Activated T-helper 2 cell treated with anti-CD3 and anti-CD28 coated beads, Interferon-gamma antibody, Interleukin-2, Interleukin-4, amounts not matched to agents 10 μg/mL and 5 μg/mL and 100 μg/mL, durations not matched to agents 14 hours and 24 hours and 36 hours (primary cell): ENCODE measurements at regions of chr10 and their contacts with region 1.

Region 1: GRCh38 chr10:60646966-60647796 is 131.1 kb upstream of the CDK1 start:
- DNase-seq: no peak
- H3K4me3 Mint-ChIP-seq: no peak overlapping the region
- H3K27ac Mint-ChIP-seq: no peak overlapping the region
- H3K4me1 Mint-ChIP-seq: peaks cover 8% of the 10 kb centered on the region
- H3K27me3 Mint-ChIP-seq: no peaks in the 10 kb centered on the region

Region 2: DNA sequence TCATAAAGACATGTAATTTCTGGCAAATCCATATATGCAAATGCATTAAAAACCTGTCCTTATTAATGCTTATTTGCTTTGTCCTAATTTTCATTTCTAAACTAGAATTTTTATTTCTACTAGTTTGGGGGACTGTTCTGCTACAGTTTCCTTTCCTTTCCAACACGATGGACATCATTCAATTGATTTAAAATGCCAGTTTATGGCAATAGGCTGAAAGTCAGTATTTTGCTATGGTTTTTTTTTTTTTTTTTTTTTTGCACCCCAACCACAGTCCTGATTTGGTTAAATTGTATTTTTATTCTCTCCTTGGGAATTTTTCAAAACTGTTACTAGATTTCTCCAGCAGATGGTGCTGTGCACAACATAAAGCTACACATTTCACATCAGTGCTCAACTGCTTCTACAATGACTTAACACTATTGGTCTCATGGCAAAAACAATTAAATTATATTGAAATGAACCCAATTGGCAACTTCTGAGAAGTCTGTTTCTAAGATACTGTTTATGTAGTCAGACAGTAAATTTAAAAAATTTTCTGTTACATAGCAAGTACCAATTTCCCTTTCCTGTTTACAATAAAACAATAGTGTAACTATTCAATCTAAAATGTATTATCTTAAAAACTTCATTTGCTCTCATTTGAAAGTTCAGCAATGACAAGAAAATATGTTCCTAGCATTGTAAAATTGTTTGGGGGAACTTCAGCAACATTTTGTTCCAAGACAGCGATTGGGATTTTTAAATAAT is 547.0 kb before region 1 on chr10:
- intact Hi-C with region 1: loop called (anchors 2 kb)
- DNase-seq: no peak
- H3K4me3 Mint-ChIP-seq: no peak overlapping the region
- H3K27ac Mint-ChIP-seq: no peak overlapping the region
- H3K4me1 Mint-ChIP-seq: no peaks in the 10 kb centered on the region
- H3K27me3 Mint-ChIP-seq: no peaks in the 10 kb centered on the region

Region 3: DNA sequence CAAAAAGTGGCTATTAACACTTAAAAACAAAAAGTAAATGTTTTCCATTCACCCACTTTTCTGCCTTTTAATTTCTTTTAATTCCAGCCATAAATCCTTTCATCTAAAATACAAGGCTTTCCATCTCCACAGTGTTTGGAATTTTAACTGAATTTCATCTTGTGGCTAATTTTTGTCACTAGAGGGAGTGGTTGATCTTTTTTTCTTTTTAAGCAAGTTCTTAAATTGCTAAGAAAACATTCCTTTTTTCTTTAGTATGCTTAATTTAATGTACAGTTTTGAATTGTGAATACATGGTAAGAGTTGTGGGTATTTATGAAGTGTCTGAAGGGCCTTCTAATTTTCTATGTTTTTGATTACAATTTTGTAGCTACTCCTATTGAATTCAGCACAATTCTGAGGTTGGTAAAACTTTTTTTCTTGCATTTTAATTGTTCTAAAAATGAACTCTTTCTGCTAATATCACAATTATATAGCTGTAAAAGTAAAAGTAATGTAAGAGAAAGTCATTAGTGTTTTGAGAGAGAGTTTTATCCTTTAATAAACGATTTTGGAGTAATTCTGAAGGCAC is 202.6 kb before region 1 on chr10:
- intact Hi-C with region 1: loop called (anchors 1 kb)
- DNase-seq: no peak
- H3K4me3 Mint-ChIP-seq: no peak overlapping the region
- H3K27ac Mint-ChIP-seq: no peak overlapping the region
- H3K4me1 Mint-ChIP-seq: peaks cover 5% of the 10 kb centered on the region
- H3K27me3 Mint-ChIP-seq: no peaks in the 10 kb centered on the region

Region 4: DNA sequence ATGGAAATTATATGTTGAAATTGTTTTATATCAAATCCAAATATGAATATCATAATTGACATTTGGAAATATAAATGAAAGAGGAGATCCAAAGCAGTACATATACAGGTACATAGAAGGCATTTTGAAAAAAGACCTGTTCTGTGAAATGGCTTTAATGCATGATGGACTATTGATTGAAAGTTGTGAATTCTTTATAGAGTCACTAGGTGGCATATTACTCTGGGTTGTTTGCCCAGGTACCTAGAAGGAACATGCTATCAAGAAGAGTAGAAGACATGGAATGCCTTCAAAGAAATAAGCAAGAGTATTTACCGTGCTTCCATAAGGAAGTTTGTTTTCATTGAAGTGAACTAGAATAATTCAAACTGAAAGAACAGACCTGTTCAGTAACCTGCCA is 97.5 kb before region 1 on chr10:
- intact Hi-C with region 1: loop called (anchors 1 kb)
- DNase-seq: no peak
- H3K4me3 Mint-ChIP-seq: no peak overlapping the region
- H3K27ac Mint-ChIP-seq: no peak overlapping the region
- H3K4me1 Mint-ChIP-seq: no peaks in the 10 kb centered on the region
- H3K27me3 Mint-ChIP-seq: no peaks in the 10 kb centered on the region

Region 5: DNA sequence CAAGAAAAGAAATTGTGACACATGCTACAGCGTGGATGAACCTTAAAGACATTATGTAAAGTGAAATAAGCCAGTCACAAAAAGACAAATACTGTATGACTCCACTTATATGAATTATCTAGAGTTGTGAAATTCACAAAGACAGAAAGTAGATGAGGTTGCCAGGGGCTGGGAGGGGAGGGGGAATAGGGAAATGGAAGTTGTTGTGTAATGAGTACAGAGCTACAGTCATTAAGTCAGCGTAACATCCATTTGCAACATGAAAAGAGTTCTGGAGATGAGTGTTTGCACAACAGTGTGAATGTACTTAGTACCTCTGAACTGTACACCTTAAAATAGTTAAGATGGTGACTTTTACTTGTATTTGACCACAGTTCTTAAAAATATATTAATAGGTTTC is 19.0 kb after region 1 on chr10:
- intact Hi-C with region 1: no loop called
- DNase-seq: no peak
- H3K4me3 Mint-ChIP-seq: no peak overlapping the region
- H3K27ac Mint-ChIP-seq: no peak overlapping the region
- H3K4me1 Mint-ChIP-seq: peaks cover 12% of the 10 kb centered on the region
- H3K27me3 Mint-ChIP-seq: no peaks in the 10 kb centered on the region

Region 6: GRCh38 chr10:60704480-60704879 is 57.3 kb after region 1 on chr10:
- intact Hi-C with region 1: no loop called
- DNase-seq: no peak
- H3K4me3 Mint-ChIP-seq: no peak overlapping the region
- H3K27ac Mint-ChIP-seq: no peak overlapping the region
- H3K4me1 Mint-ChIP-seq: peaks cover 22% of the 10 kb centered on the region
- H3K27me3 Mint-ChIP-seq: no peaks in the 10 kb centered on the region